ENCODE measurements at regions of chr3 and their contacts with region 1.

Region 1: DNA sequence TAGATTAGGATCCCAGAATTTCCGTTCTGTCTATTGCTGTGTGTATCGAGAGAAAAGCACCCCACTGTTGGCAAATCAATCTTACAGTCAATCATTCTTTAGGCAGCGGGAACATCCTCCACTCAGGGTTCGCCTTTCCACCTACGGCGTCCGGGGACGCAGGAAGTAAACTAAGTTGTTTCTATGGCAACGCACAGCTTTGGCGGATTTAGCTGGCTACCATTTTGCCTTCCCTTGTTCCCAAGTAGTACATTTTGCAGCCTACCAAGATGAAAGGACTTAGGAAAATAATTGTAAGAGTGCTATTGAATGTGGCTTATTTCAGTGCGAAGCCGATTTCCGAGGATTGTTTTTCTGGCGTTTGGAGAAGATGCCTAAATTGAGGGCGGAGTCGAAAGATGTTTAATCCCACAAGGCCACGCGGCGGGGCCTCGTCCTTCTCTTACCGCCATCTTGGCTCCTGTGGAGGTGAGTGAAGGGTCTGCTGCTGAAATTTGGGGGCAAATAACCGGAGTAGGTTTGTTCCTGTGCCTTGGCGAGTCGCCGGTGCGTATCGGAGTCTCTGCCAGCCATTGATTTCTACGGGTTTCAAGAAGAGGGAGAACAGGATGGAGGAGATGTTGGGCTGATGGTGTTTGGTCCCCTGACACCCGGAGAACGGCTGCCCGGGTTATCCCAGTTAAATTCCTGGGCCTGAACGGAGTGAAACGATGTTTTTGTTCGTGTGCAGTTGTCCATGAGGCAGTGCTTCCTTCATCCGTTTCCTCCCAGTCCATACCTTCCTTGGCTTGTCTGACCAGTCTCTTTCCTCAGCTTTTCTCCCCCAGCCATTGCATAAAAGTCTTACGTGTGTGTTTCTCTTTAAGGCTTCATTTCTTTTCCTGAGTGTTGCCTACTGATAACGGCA is at the start of gene RPL35A:
- DNase-seq: peak; percentile 85 to 94 (median 88)
- H3K4me3 ChIP-seq: peak within 1 kb of the TSS; percentile 46 to 86 (median 62)
- H3K27ac ChIP-seq: peak within 1 kb of the TSS; percentile 81 to 94 (median 86)
- H3K4me1 ChIP-seq: peaks cover 31 to 51% of the 10 kb centered on the region in 2 donors
- H3K27me3 ChIP-seq: no peaks in the 10 kb centered on the region
- CTCF ChIP-seq: no peak
- POLR2A ChIP-seq: peak; percentile 69
- total RNA-seq, gene RPL35A: 564 to 1,614 (median 1,018) TPM

Region 2: GRCh38 chr3:197352382-197352781 is 597.6 kb before region 1 on chr3:
- intact Hi-C with region 1: no loop called
- DNase-seq: peak; percentile 79 to 94 (median 90)
- H3K4me3 ChIP-seq: no peak overlapping the region
- H3K27ac ChIP-seq: no peak overlapping the region
- H3K4me1 ChIP-seq: peaks cover 6 to 9% of the 10 kb centered on the region in 2 donors
- H3K27me3 ChIP-seq: no peaks in the 10 kb centered on the region
- CTCF ChIP-seq: no peak
- POLR2A ChIP-seq: no peak

Region 3: DNA sequence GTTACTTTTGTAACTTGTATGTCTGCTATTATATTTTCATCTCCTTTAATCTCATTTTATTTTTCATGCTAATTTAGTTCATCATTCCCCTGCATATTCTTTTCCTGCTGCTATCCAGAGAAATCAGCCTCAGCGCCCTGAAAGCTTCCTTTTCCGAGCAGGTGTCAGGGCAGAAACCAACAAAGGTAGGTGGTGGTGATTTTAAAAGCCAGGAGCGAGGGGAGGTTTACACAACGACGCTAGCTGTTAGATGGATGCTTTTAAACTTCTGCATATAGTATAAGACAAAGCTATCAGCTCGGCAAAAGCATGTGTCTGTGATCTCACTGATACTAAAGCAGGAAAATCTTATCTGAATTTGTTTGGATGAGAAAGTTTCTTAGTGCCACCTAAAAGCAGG is 84.0 kb before region 1 on chr3:
- intact Hi-C with region 1: no loop called
- DNase-seq: no peak
- H3K4me3 ChIP-seq: no peak overlapping the region
- H3K27ac ChIP-seq: no peak overlapping the region
- H3K4me1 ChIP-seq: no peaks in the 10 kb centered on the region
- H3K27me3 ChIP-seq: no peaks in the 10 kb centered on the region
- CTCF ChIP-seq: no peak
- POLR2A ChIP-seq: no peak

Region 4: GRCh38 chr3:197889204-197889930 is 60.6 kb before region 1 on chr3:
- intact Hi-C with region 1: no loop called
- DNase-seq: no peak
- H3K4me3 ChIP-seq: no peak overlapping the region
- H3K27ac ChIP-seq: no peak overlapping the region
- H3K4me1 ChIP-seq: no peaks in the 10 kb centered on the region
- H3K27me3 ChIP-seq: no peaks in the 10 kb centered on the region
- CTCF ChIP-seq: no peak
- POLR2A ChIP-seq: no peak

Region 5: DNA sequence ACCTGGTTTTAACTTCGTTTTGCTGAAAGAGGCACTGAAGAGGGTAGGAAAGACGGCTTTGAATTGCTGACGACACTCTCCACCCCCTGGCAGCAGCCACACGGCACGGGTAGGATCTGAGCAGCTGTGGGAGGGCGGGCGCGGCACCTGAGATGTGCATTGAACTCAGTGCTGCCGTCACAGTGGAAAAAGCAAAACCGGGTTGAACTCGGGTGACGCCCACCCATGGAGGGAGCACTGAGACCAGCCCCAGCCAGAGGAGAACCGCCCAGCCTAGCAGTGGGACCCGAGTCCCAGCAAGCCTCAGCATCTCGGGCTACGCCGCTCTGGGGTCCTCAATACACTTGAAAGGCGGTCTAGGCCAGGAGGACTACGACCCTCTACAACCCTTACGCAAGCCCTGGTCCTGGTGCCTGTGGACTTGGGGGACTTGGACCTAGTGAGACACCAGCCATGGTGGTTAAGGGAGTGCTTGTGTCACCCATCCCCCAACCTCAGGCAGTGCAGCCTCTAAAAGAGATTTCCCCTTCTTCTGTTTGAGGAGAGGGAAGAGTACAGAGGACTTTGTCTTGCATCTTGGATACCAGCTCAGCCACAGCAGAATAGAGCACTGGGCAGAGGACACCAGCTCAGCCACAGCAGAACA is 50.1 kb before region 1 on chr3:
- intact Hi-C with region 1: loop called in 1 of 2 experiments (anchors 5 kb)
- DNase-seq: no peak
- H3K4me3 ChIP-seq: no peak overlapping the region
- H3K27ac ChIP-seq: no peak overlapping the region
- H3K4me1 ChIP-seq: no peaks in the 10 kb centered on the region
- H3K27me3 ChIP-seq: no peaks in the 10 kb centered on the region
- CTCF ChIP-seq: no peak
- POLR2A ChIP-seq: no peak

Region 6: DNA sequence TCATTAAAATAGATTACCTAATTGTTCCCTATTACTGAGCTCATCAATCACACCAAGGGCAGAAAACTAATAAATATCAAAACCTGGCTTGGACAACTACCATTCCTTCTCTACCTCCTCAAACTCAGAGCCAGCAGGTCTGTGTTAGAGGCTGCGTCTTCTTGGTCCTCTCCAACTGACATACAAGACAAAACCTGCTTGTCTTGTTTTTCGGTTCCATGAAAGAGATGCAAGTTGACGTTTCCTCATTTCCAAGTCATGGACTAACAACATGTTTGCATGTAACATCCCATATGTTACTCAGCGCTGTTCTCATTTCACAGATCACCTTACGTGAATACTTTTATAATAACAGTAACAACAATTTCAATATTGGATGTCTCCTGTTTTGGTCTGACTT is 120.8 kb after region 1 on chr3:
- intact Hi-C with region 1: no loop called
- DNase-seq: no peak
- H3K4me3 ChIP-seq: no peak overlapping the region
- H3K27ac ChIP-seq: no peak overlapping the region
- H3K4me1 ChIP-seq: no peaks in the 10 kb centered on the region
- H3K27me3 ChIP-seq: peaks cover 24% of the 10 kb centered on the region
- CTCF ChIP-seq: no peak
- POLR2A ChIP-seq: no peak

Measured in adrenal gland (tissue), 19 donors.